CD14-positive monocyte (primary cell): ENCODE measurements at regions of chr17 and their contacts with region 1.

Region 1: GRCh38 chr17:42112552-42113176 is at the start of gene DHX58:
- DNase-seq: peak; percentile 82 to 88 (median 86)
- H3K4me3 ChIP-seq: peak within 1 kb of the TSS; percentile 58 to 81 (median 66)
- H3K4me3 Mint-ChIP-seq: peak within 1 kb of the TSS; percentile 88 to 93
- H3K27ac ChIP-seq: peak within 1 kb of the TSS; percentile 72 to 85
- H3K27ac Mint-ChIP-seq: peak within 1 kb of the TSS; percentile 88 to 95 (median 93)
- H3K4me1 ChIP-seq: peaks cover 22 to 26% of the 10 kb centered on the region in 2 donors
- H3K4me1 Mint-ChIP-seq: peaks cover 33% of the 10 kb centered on the region
- H3K27me3 ChIP-seq: no peaks in the 10 kb centered on the region
- H3K27me3 Mint-ChIP-seq: peaks cover 0 to 3% (median 0%) of the 10 kb centered on the region in 3 donors
- CTCF ChIP-seq: no peak
- polyA plus RNA-seq, gene DHX58: 13.2 to 46.7 (median 16.0) TPM

Region 2: GRCh38 chr17:41918314-41919164 is 194.1 kb before region 1 on chr17 and contains the start of gene ACLY:
- intact Hi-C with region 1: loop called in 1 of 2 experiments (anchors 5 kb)
- DNase-seq: peak; percentile 89 to 96 (median 92)
- H3K4me3 ChIP-seq: peak within 1 kb of the TSS; percentile 65 to 99 (median 85)
- H3K4me3 Mint-ChIP-seq: peak within 1 kb of the TSS; percentile 94 to 96
- H3K27ac ChIP-seq: peak within 1 kb of the TSS; percentile 64 to 90
- H3K27ac Mint-ChIP-seq: peak within 1 kb of the TSS; percentile 81 to 93 (median 82)
- H3K4me1 ChIP-seq: peaks cover 21 to 24% of the 10 kb centered on the region in 2 donors
- H3K4me1 Mint-ChIP-seq: peaks cover 34% of the 10 kb centered on the region
- H3K27me3 ChIP-seq: no peaks in the 10 kb centered on the region
- H3K27me3 Mint-ChIP-seq: peaks cover 0 to 2% (median 0%) of the 10 kb centered on the region in 3 donors
- CTCF ChIP-seq: no peak
- polyA plus RNA-seq, gene ACLY: 41.0 to 48.3 (median 45.1) TPM

Region 3: DNA sequence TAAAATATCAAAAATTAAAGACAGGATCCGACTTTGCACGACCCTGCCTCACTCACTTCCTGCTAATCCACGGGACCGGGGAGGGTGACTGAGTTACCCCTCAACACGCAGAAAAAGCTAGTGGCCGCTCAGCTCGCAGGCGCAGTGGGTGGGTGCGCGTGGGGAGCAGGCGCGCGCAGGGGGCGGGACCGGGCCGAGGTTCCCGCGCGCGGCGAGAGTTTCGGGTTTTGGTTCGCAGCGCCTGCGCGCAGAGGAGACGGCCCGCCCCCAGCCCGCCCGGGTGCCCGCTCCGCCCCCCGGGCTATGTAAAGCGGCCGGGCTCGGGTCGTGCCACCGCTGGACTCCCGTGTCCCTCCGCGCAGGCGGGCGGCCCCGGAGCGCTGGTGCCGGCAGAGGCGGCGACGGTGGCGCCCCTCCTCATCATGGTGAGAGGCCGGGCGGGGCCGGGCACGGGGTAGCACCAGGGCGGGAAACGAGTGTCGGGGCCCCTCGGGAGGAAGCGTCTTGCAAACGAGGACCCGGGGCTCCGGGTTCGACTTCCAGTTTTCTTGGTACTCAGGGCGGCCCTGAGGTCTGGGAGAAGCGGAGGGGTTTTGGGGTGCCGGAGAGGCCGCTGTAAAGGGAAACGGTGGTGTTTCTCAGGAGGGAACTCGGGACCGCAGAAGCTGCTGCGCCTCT is 146.1 kb before region 1 on chr17 and contains the start of gene CNP:
- intact Hi-C with region 1: loop called (anchors 1 to 2 kb)
- DNase-seq: peak; percentile 87 to 91 (median 89)
- H3K4me3 ChIP-seq: peak within 1 kb of the TSS; percentile 67 to 93 (median 92)
- H3K4me3 Mint-ChIP-seq: peak within 1 kb of the TSS; percentile 79 to 91
- H3K27ac ChIP-seq: peak within 1 kb of the TSS; percentile 60 to 83
- H3K27ac Mint-ChIP-seq: peak within 1 kb of the TSS; percentile 62 to 85 (median 79)
- H3K4me1 ChIP-seq: peaks cover 19 to 40% of the 10 kb centered on the region in 2 donors
- H3K4me1 Mint-ChIP-seq: peaks cover 47% of the 10 kb centered on the region
- H3K27me3 ChIP-seq: no peaks in the 10 kb centered on the region
- H3K27me3 Mint-ChIP-seq: peaks cover 0 to 2% (median 0%) of the 10 kb centered on the region in 3 donors
- CTCF ChIP-seq: no peak
- polyA plus RNA-seq, gene CNP: 19.0 to 50.2 (median 47.0) TPM

Region 4: DNA sequence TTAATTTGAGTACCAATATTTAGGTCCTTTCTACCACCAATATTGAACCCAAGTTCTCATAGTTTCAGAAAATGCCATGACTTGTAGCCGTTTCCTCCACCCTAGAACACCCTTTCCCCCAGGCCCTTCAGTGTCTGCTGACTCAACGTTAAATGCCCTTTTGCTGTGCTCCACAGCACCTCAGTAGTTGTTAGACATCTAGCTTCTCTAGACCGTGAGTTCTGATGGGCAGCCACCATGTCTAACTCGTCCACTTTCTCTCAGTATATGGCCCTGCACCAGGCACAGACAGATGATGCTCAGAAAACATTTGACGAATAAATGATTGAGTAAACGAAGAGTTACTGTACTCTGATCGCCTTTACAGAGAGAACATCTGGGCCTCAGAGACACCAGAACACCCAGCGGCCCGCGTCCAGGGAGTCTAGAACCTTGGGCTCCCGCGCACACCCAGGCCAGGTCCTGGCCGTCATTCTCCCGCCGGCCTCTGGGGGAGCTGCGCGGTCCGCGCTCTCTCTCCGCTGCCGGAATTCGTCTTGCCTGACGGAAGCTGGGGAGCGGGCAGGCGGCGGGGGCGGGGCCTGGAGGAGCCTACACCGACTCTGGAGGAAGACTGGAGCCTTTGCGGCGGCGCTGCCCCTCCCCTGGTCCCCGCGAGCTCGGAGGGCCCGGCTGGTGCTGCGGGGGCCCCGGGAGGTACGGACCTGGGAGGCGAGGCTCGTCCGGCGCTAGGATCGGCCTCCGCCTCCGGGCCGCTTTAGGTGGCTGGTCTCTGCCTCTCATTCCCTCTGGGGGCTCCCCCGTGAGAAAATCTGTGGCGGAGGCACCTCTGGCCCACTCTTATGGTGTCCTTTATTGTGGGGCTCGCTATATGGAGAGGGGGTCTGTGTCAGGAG is 92.9 kb before region 1 on chr17 and contains the start of gene NKIRAS2:
- intact Hi-C with region 1: loop called in 1 of 2 experiments (anchors 2 kb)
- DNase-seq: peak; percentile 90
- H3K4me3 ChIP-seq: peak within 1 kb of the TSS; percentile 90 to 98 (median 97)
- H3K4me3 Mint-ChIP-seq: peak within 1 kb of the TSS; percentile 87 to 90
- H3K27ac ChIP-seq: peak within 1 kb of the TSS; percentile 66 to 90
- H3K27ac Mint-ChIP-seq: peak within 1 kb of the TSS; percentile 85 to 96 (median 90)
- H3K4me1 ChIP-seq: peaks cover 69 to 82% of the 10 kb centered on the region in 2 donors
- H3K4me1 Mint-ChIP-seq: peaks cover 73% of the 10 kb centered on the region
- H3K27me3 ChIP-seq: no peaks in the 10 kb centered on the region
- H3K27me3 Mint-ChIP-seq: no peaks in the 10 kb centered on the region
- CTCF ChIP-seq: peak; percentile 96
- polyA plus RNA-seq, gene NKIRAS2: 51.1 to 77.1 (median 69.9) TPM

Region 5: DNA sequence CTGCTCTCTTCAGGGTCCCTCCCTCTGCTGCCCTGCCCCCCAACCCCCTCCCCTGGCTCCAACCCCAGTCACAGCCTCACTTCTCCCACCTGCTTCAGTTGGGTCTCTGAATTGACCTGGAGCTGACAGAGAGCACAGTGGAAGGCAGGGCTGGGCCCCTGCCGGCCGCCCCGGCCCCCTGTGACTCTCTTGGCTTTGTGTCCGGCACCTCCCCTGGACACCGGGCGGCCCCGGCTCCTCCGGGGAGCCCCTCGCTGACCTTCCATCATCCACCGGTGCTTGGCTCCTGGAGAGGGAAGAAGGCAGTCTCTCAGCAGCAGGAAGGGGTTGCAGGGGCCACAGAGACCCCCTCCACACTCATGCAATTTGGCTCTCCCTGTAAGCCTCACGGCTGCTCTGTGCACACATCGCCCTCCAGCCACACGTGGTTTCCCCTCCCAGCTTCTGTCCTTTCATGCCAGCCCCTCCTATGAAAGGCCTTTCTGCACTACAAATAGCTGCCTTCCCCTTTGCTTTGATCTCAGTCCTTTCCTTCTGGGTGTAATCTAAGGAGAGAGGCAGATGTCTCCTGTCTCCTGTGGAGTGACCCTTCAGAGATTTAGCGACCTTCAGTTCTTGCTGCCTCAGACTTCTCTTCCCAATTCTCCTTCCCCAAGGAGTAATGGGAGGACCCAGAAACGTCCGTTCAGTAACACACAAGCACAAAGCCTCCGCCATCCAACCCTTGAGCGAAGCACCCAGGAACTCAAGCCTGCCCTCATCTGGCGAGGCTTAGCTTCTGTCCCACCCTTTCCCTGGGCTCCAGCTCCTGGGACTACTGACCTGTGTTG is 84.5 kb before region 1 on chr17:
- intact Hi-C with region 1: loop called (anchors 2 to 5 kb)
- DNase-seq: peak in 1 of 3 donors; percentile 14
- H3K4me3 ChIP-seq: no peak overlapping the region
- H3K4me3 Mint-ChIP-seq: peak overlapping the region in 1 of 2 donors; percentile 17
- H3K27ac ChIP-seq: no peak overlapping the region
- H3K27ac Mint-ChIP-seq: peak overlapping the region in 3 of 7 donors; percentile 21 to 73 (median 28)
- H3K4me1 ChIP-seq: peaks cover 46 to 53% of the 10 kb centered on the region in 2 donors
- H3K4me1 Mint-ChIP-seq: peaks cover 51% of the 10 kb centered on the region
- H3K27me3 ChIP-seq: no peaks in the 10 kb centered on the region
- H3K27me3 Mint-ChIP-seq: peaks cover 0 to 5% (median 4%) of the 10 kb centered on the region in 3 donors
- CTCF ChIP-seq: peak; percentile 22

Region 6: GRCh38 chr17:42061646-42062487 is 50.8 kb before region 1 on chr17:
- intact Hi-C with region 1: loop called in 1 of 2 experiments (anchors 5 kb)
- DNase-seq: no peak
- H3K4me3 ChIP-seq: no peak overlapping the region
- H3K4me3 Mint-ChIP-seq: peak overlapping the region in 1 of 2 donors; percentile 21
- H3K27ac ChIP-seq: no peak overlapping the region
- H3K27ac Mint-ChIP-seq: peak overlapping the region in 2 of 7 donors; percentile 6 to 52
- H3K4me1 ChIP-seq: peaks cover 15 to 16% of the 10 kb centered on the region in 2 donors
- H3K4me1 Mint-ChIP-seq: peaks cover 27% of the 10 kb centered on the region
- H3K27me3 ChIP-seq: no peaks in the 10 kb centered on the region
- H3K27me3 Mint-ChIP-seq: peaks cover 0 to 3% (median 2%) of the 10 kb centered on the region in 3 donors
- CTCF ChIP-seq: no peak

Region 7: GRCh38 chr17:42183741-42184711 is 71.4 kb after region 1 on chr17:
- intact Hi-C with region 1: no loop called
- DNase-seq: peak; percentile 76 to 81 (median 80)
- H3K4me3 ChIP-seq: peak overlapping the region; percentile 41 to 89 (median 68)
- H3K4me3 Mint-ChIP-seq: peak overlapping the region; percentile 87 to 95
- H3K27ac ChIP-seq: peak overlapping the region; percentile 74 to 88
- H3K27ac Mint-ChIP-seq: peak overlapping the region; percentile 86 to 93 (median 92)
- H3K4me1 ChIP-seq: peaks cover 74 to 85% of the 10 kb centered on the region in 2 donors
- H3K4me1 Mint-ChIP-seq: peaks cover 75% of the 10 kb centered on the region
- H3K27me3 ChIP-seq: peaks cover 8 to 26% of the 10 kb centered on the region in 2 donors
- H3K27me3 Mint-ChIP-seq: peaks cover 23 to 29% (median 26%) of the 10 kb centered on the region in 3 donors
- CTCF ChIP-seq: peak; percentile 96

Region 8: GRCh38 chr17:42294469-42295398 is 182.1 kb after region 1 on chr17:
- intact Hi-C with region 1: no loop called
- DNase-seq: no peak
- H3K4me3 ChIP-seq: no peak overlapping the region
- H3K4me3 Mint-ChIP-seq: peak overlapping the region in 1 of 2 donors; percentile 49
- H3K27ac ChIP-seq: peak overlapping the region in 1 of 2 donors; percentile 20
- H3K27ac Mint-ChIP-seq: peak overlapping the region in 6 of 7 donors; percentile 43 to 85 (median 69)
- H3K4me1 ChIP-seq: peaks cover 19 to 26% of the 10 kb centered on the region in 2 donors
- H3K4me1 Mint-ChIP-seq: peaks cover 41% of the 10 kb centered on the region
- H3K27me3 ChIP-seq: no peaks in the 10 kb centered on the region
- H3K27me3 Mint-ChIP-seq: peaks cover 0 to 3% (median 2%) of the 10 kb centered on the region in 3 donors
- CTCF ChIP-seq: no peak